ENCODE measurements at regions of chr2 and their contacts with region 1.

Region 1: GRCh38 chr2:112121682-112122254 is 16.4 kb upstream of the FBLN7 start:
- DNase-seq: no peak
- ATAC-seq: no peak
- H3K4me3 Mint-ChIP-seq: no peak overlapping the region
- H3K27ac Mint-ChIP-seq: no peak overlapping the region
- H3K4me1 Mint-ChIP-seq: peaks cover 1% of the 10 kb centered on the region
- H3K27me3 Mint-ChIP-seq: no peaks in the 10 kb centered on the region
- CTCF ChIP-seq: peak; percentile 47

Region 2: DNA sequence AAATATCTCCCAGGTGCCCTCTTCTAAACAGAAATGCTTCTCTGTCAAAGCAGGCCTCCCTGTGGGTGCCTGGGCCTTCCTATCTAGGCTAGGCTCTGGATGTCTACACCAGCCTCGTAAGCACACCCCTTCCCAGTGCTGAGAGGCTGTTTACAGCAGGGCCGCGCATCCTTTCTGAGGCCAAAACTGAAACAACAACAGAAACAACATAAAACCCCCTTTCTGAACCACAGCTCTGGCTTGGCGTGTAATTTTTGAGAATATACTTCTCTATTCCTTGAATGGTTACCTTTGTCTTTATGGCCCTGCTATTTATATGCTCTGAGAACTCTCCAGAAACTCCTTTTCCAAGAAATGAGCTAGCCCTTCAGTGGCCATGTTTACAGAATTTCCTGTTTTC is 882.7 kb before region 1 on chr2:
- CTCF ChIA-PET with region 1: no interaction called
- POLR2A ChIA-PET with region 1: no interaction called
- intact Hi-C with region 1: no loop called
- DNase-seq: no peak
- ATAC-seq: peak; percentile 31
- H3K4me3 Mint-ChIP-seq: no peak overlapping the region
- H3K27ac Mint-ChIP-seq: no peak overlapping the region
- H3K4me1 Mint-ChIP-seq: no peaks in the 10 kb centered on the region
- H3K27me3 Mint-ChIP-seq: no peaks in the 10 kb centered on the region
- CTCF ChIP-seq: no peak

Region 3: GRCh38 chr2:112259509-112260294 is 137.9 kb after region 1 on chr2:
- CTCF ChIA-PET with region 1: interaction called, 14 read pairs
- POLR2A ChIA-PET with region 1: interaction called, 4 read pairs
- intact Hi-C with region 1: loop called (anchors 5 kb)
- DNase-seq: peak; percentile 66
- ATAC-seq: peak; percentile 38
- H3K4me3 Mint-ChIP-seq: peak overlapping the region; percentile 75
- H3K27ac Mint-ChIP-seq: no peak overlapping the region
- H3K4me1 Mint-ChIP-seq: peaks cover 14% of the 10 kb centered on the region
- H3K27me3 Mint-ChIP-seq: no peaks in the 10 kb centered on the region
- CTCF ChIP-seq: peak; percentile 68

Region 4: DNA sequence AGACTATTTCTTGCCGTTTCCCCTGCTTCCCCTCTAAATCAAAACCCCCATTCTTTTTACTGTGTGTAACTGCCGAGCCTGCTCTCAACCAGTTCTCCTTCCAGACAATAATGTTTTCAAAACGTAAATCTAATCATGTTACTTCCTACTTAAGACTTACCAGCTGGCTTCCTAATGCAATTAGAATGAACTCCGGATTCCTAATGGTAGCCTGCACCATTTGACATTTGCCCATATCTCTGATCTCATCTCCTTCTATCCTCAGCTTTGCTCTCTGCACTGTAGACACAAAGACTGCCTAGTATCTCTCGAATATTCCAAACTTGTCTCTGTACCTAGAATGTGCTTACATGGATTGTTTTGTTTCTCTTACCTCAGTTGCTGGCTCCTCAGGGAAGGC is 373.1 kb after region 1 on chr2:
- CTCF ChIA-PET with region 1: no interaction called
- POLR2A ChIA-PET with region 1: interaction called, 3 read pairs
- intact Hi-C with region 1: loop called (anchors 5 kb)
- DNase-seq: no peak
- ATAC-seq: no peak
- H3K4me3 Mint-ChIP-seq: no peak overlapping the region
- H3K27ac Mint-ChIP-seq: no peak overlapping the region
- H3K4me1 Mint-ChIP-seq: no peaks in the 10 kb centered on the region
- H3K27me3 Mint-ChIP-seq: no peaks in the 10 kb centered on the region
- CTCF ChIP-seq: no peak